Psoas muscle (tissue), 8 donors: ENCODE measurements at regions of chrX and their contacts with region 1.

Region 1: DNA sequence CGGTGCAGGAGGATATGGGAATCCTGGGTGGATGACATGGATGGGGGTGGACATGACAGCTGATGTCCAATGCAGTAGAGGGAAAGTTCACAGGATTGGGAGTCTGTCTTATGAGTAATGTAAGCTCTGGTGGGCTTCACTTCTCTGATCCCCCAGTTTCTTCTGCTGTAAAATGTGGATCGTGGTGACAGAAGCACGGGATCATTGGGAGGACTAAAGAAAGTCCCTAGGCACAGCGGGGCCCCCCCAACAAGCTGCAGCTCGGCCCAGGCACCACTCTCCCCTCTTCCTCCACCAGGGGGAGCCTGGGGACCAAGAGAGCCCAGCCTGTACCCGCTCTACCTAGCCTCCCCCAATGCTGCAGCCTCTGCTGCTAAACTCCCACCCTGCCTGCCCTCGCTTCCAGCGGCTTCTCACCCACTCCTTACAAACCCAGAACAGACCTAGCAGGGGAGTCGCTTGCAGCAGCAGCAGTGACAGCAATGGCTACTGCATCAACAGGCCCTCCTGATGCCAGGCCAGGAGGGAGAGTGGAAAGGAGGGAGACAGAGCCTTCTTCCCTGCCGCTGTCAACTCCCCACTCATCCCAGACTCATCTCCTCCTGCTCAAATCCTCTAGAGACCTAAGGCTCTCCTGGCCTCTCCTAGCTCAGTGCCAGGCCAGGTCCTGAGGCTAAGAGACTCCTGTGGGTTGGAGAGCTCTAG is 36.1 kb upstream of the IQSEC2 start:
- DNase-seq: peak; percentile 67 to 82
- ATAC-seq: peak; percentile 76 to 81 (median 78)
- H3K4me3 ChIP-seq: no peak overlapping the region
- H3K27ac ChIP-seq: no peak overlapping the region
- H3K4me1 ChIP-seq: no peaks in the 10 kb centered on the region
- H3K27me3 ChIP-seq: peaks cover 0 to 48% (median 0%) of the 10 kb centered on the region in 3 donors
- CTCF ChIP-seq: peak; percentile 78

Region 2: GRCh38 chrX:53433651-53434639 is 116.4 kb after region 1 on chrX and contains the start of gene HSD17B10:
- intact Hi-C with region 1: loop called (anchors 2 to 10 kb)
- DNase-seq: peak; percentile 91 to 94
- ATAC-seq: peak; percentile 97 to 99 (median 98)
- H3K4me3 ChIP-seq: peak within 1 kb of the TSS; percentile 79
- H3K27ac ChIP-seq: peak within 1 kb of the TSS; percentile 74
- H3K4me1 ChIP-seq: peaks cover 4% of the 10 kb centered on the region
- H3K27me3 ChIP-seq: peaks cover 0 to 23% (median 0%) of the 10 kb centered on the region in 3 donors
- CTCF ChIP-seq: no peak
- total RNA-seq, gene HSD17B10: 51.8 to 98.0 (median 68.4) TPM

Region 3: GRCh38 chrX:53481816-53482465 is 164.4 kb after region 1 on chrX:
- intact Hi-C with region 1: loop called in 1 of 2 experiments (anchors 2 kb)
- DNase-seq: peak in 1 of 2 donors; percentile 18
- ATAC-seq: peak; percentile 39 to 65 (median 60)
- H3K4me3 ChIP-seq: no peak overlapping the region
- H3K27ac ChIP-seq: no peak overlapping the region
- H3K4me1 ChIP-seq: no peaks in the 10 kb centered on the region
- H3K27me3 ChIP-seq: no peaks in the 10 kb centered on the region
- CTCF ChIP-seq: peak; percentile 50